ENCODE measurements at regions of chr17 and their contacts with region 1.

Region 1: GRCh38 chr17:19513897-19514488 is 19.7 kb upstream of the SLC47A1 start:
- DNase-seq: peak; percentile 84
- H3K4me3 ChIP-seq: no peak overlapping the region
- H3K27ac ChIP-seq: no peak overlapping the region
- H3K4me1 ChIP-seq: peaks cover 0 to 11% (median 7%) of the 10 kb centered on the region in 6 donors
- H3K27me3 ChIP-seq: no peaks in the 10 kb centered on the region
- CTCF ChIP-seq: peak; percentile 68 to 89 (median 83)
- POLR2A ChIP-seq: no peak

Region 2: GRCh38 chr17:19596869-19597268 is 82.9 kb after region 1 on chr17:
- intact Hi-C with region 1: no loop called
- DNase-seq: no peak
- H3K4me3 ChIP-seq: no peak overlapping the region
- H3K27ac ChIP-seq: no peak overlapping the region
- H3K4me1 ChIP-seq: no peaks in the 10 kb centered on the region
- H3K27me3 ChIP-seq: no peaks in the 10 kb centered on the region
- CTCF ChIP-seq: no peak
- POLR2A ChIP-seq: no peak

Region 3: GRCh38 chr17:19648475-19649406 is 134.7 kb after region 1 on chr17 and contains the start of gene ALDH3A2:
- intact Hi-C with region 1: loop called (anchors 10 kb)
- DNase-seq: peak; percentile 100
- H3K4me3 ChIP-seq: peak within 1 kb of the TSS; percentile 36 to 100 (median 92)
- H3K27ac ChIP-seq: peak within 1 kb of the TSS; percentile 90 to 98 (median 95)
- H3K4me1 ChIP-seq: peaks cover 18 to 69% (median 53%) of the 10 kb centered on the region in 6 donors
- H3K27me3 ChIP-seq: no peaks in the 10 kb centered on the region
- CTCF ChIP-seq: peak in 7 of 11 experiments; percentile 11 to 49 (median 26)
- POLR2A ChIP-seq: peak in 2 of 3 donors; percentile 68 to 94
- total RNA-seq, gene ALDH3A2: 26.7 to 73.1 (median 68.1) TPM

Region 4: GRCh38 chr17:19766422-19767270 is 252.7 kb after region 1 on chr17:
- intact Hi-C with region 1: loop called (anchors 2 kb)
- DNase-seq: peak; percentile 94
- H3K4me3 ChIP-seq: no peak overlapping the region
- H3K27ac ChIP-seq: no peak overlapping the region
- H3K4me1 ChIP-seq: peaks cover 0 to 22% (median 9%) of the 10 kb centered on the region in 6 donors
- H3K27me3 ChIP-seq: no peaks in the 10 kb centered on the region
- CTCF ChIP-seq: peak; percentile 84 to 96 (median 90)
- POLR2A ChIP-seq: no peak